Psoas muscle (tissue), 8 donors: ENCODE measurements at regions of chr10 and their contacts with region 1.

Region 1: DNA sequence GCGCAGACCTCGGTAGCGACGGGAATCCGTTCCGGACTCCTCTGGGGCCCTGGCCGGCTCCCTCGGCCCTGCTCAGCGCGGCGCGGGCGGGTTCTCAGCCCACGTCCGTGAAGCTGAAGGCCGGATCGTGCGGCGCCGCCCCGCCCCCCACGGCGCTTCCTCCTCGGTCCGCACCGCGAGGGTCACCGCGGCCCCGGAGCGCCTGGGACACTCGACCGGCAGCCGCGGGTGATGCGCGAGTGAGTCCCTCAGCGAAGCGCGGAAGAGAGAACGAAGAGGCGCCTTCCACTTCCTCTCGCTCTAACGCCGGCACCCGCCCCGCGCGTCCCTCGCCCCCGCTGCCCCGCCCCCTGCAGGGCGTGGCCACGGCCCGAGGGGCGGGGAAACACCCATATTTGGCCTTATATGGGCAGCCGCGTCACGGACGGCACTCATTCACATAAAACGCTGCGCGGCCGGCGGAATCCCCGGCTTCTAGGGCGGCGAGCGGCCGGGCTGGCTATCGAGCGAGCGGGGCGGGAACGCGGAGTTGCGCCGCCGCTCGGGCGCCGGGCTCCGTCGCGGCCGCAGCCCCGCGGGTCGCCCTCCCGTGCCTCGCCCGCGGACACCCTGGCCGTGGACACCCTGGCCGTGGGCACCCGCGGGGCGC is at the start of gene DUSP5:
- DNase-seq: peak; percentile 93 to 95
- ATAC-seq: peak; percentile 92 to 97 (median 95)
- H3K4me3 ChIP-seq: peak within 1 kb of the TSS; percentile 86
- H3K27ac ChIP-seq: peak within 1 kb of the TSS; percentile 81
- H3K4me1 ChIP-seq: peaks cover 31% of the 10 kb centered on the region
- H3K27me3 ChIP-seq: peaks cover 0 to 19% (median 2%) of the 10 kb centered on the region in 3 donors
- CTCF ChIP-seq: peak; percentile 1
- total RNA-seq, gene DUSP5: 1.3 to 2.9 (median 2.4) TPM

Region 2: DNA sequence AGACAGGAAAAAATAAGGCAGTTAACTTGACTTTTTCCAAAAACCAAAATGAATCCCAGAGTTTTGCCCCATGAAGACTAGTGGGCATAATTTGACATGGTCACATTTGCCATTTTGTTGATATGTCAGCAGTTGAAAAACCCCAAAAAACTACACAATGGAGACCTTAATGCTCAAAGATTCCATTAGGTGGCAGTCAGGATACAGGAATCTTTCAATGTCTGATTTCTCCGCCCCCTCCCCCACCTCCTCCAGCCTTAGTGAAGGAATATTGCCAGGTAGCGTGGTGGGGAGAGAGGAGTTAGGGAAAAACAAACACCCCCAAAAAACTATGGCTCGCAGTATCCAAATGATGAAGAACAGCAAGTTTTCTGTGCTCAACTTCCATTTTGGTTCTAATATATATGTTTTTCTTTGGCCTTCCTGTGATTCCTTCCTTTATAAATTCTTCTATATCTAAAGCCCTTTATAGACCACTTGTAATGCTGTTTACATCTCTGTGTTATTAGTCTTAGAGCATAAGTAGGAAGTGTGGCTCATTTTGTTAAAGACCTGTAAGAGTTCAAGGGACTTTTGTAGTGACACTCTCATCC is 186.1 kb before region 1 on chr10:
- intact Hi-C with region 1: loop called in 1 of 2 experiments (anchors 5 kb)
- DNase-seq: no peak
- ATAC-seq: peak; percentile 51 to 84 (median 68)
- H3K4me3 ChIP-seq: no peak overlapping the region
- H3K27ac ChIP-seq: no peak overlapping the region
- H3K4me1 ChIP-seq: peaks cover under 1% of the 10 kb centered on the region
- H3K27me3 ChIP-seq: no peaks in the 10 kb centered on the region
- CTCF ChIP-seq: peak; percentile 62

Region 3: GRCh38 chr10:110354322-110354766 is 143.2 kb before region 1 on chr10:
- intact Hi-C with region 1: loop called in 1 of 2 experiments (anchors 10 kb)
- DNase-seq: peak; percentile 68 to 78
- ATAC-seq: peak; percentile 59 to 77 (median 72)
- H3K4me3 ChIP-seq: no peak overlapping the region
- H3K27ac ChIP-seq: no peak overlapping the region
- H3K4me1 ChIP-seq: no peaks in the 10 kb centered on the region
- H3K27me3 ChIP-seq: peaks cover 0 to 12% (median 0%) of the 10 kb centered on the region in 3 donors
- CTCF ChIP-seq: peak; percentile 54